ENCODE measurements at regions of chr5 and their contacts with region 1.

Region 1: DNA sequence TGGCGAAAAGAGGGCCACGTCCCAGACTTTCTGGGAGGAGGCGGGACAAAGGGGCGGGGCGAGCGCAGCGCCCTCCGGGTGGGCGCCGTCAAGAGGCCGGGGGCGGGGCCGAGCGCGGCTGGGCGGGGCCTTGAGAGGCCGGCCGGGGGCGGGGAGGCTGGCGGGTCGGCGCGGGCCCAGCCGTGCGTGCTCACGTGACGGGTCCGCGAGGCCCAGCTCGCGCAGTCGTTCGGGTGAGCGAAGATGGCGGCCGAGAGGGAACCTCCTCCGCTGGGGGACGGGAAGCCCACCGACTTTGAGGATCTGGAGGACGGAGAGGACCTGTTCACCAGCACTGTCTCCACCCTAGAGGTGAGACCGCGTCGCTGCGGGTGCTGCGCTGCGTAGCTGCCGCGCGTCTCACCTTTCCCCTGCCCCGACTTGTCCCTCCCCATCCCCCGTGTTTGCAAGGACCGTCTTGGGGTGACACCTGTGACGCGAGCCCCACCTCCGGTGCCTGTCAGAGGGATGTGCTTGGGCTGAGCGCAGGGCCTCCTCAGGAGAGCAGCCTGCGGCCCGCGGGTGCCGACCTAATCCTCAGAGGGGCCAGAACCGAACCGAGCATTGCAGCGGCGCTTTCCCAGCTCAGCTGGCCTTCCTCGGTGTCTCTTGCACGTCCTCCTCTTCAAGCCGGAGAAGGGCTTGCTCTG is at the start of gene SNX2:
- DNase-seq: peak; percentile 78
- H3K4me3 ChIP-seq: peak within 1 kb of the TSS; percentile 90 to 98 (median 96)
- H3K27ac ChIP-seq: peak within 1 kb of the TSS; percentile 78
- H3K4me1 ChIP-seq: peaks cover 10% of the 10 kb centered on the region
- H3K27me3 ChIP-seq: no peaks in the 10 kb centered on the region
- CTCF ChIP-seq: peak in 1 of 2 donors; percentile 41
- total RNA-seq, gene SNX2: 42.0 to 64.9 TPM

Region 2: DNA sequence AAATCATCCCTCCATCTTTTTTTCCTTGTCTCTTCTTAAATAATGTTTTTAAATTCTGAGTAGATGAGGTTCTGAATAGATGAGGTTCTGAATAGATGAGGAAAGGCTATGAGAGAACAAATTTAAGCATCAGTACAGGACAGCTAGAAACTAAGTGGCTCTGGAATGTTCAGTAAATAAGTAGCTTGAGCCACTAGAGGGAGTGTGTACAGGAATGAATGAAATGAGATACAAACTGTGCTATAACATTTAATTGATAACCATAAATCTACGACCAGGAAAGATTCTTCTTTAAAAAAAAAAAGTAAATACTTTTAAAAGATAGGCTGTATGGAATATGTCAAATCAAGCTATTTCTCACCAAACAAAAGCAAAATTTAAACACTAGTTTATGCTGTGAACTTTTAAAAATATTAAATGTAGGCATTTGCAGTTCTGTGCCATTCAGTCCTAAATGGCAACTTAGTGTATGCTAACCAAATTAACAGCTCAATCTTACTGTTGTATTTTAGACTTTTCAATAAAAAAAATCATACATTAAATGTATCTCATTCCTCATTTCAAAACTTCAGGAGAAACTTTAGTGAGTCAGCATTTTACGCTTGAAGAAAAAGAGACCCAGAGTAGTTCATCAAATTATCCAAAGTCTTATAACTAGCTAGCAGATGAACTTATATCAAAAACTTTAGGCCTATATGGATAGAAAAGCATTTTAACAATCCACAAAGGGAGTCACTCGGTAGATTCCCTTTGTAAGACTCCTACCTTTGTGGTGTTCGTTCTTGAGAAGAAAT is 70.6 kb before region 1 on chr5:
- CTCF ChIA-PET with region 1: interaction called, 7 read pairs
- dilution Hi-C with region 1: no loop called
- in situ Hi-C with region 1: no loop called
- intact Hi-C with region 1: loop called (anchors 1 kb)
- DNase-seq: peak; percentile 35
- H3K4me3 ChIP-seq: no peak overlapping the region
- H3K27ac ChIP-seq: no peak overlapping the region
- H3K4me1 ChIP-seq: no peaks in the 10 kb centered on the region
- H3K27me3 ChIP-seq: no peaks in the 10 kb centered on the region
- CTCF ChIP-seq: peak; percentile 53 to 63

Region 3: GRCh38 chr5:122751293-122751753 is 23.7 kb before region 1 on chr5:
- CTCF ChIA-PET with region 1: no interaction called
- dilution Hi-C with region 1: no loop called
- in situ Hi-C with region 1: no loop called
- intact Hi-C with region 1: loop called (anchors 1 kb)
- DNase-seq: peak; percentile 96
- H3K4me3 ChIP-seq: no peak overlapping the region
- H3K27ac ChIP-seq: peak overlapping the region; percentile 95
- H3K4me1 ChIP-seq: peaks cover 31% of the 10 kb centered on the region
- H3K27me3 ChIP-seq: no peaks in the 10 kb centered on the region
- CTCF ChIP-seq: no peak

Region 4: GRCh38 chr5:122858454-122858853 is 83.4 kb after region 1 on chr5:
- CTCF ChIA-PET with region 1: no interaction called
- dilution Hi-C with region 1: no loop called
- in situ Hi-C with region 1: no loop called
- intact Hi-C with region 1: no loop called
- DNase-seq: peak; percentile 77
- H3K4me3 ChIP-seq: no peak overlapping the region
- H3K27ac ChIP-seq: no peak overlapping the region
- H3K4me1 ChIP-seq: peaks cover 13% of the 10 kb centered on the region
- H3K27me3 ChIP-seq: no peaks in the 10 kb centered on the region
- CTCF ChIP-seq: no peak

Measured in mammary epithelial cell (primary cell).